ENCODE measurements at regions of chr18 and their contacts with region 1.

Region 1: GRCh38 chr18:67265464-67266245 is 250.9 kb downstream of the DSEL start:
- DNase-seq: peak; percentile 86
- ATAC-seq: peak; percentile 66
- H3K4me3 ChIP-seq: peak overlapping the region; percentile 48
- H3K27ac ChIP-seq: peak overlapping the region; percentile 96
- H3K4me1 ChIP-seq: peaks cover 55% of the 10 kb centered on the region
- H3K27me3 ChIP-seq: no peaks in the 10 kb centered on the region
- CTCF ChIP-seq: no peak

Region 2: GRCh38 chr18:67310826-67311225 is 45.2 kb after region 1 on chr18:
- CTCF ChIA-PET with region 1: no interaction called
- POLR2A ChIA-PET with region 1: no interaction called
- intact Hi-C with region 1: loop called (anchors 5 kb)
- DNase-seq: peak; percentile 75
- ATAC-seq: peak; percentile 100
- H3K4me3 ChIP-seq: no peak overlapping the region
- H3K27ac ChIP-seq: peak overlapping the region; percentile 72
- H3K4me1 ChIP-seq: peaks cover 12% of the 10 kb centered on the region
- H3K27me3 ChIP-seq: no peaks in the 10 kb centered on the region
- CTCF ChIP-seq: no peak